ENCODE measurements at regions of chr11 and their contacts with region 1.

Region 1: DNA sequence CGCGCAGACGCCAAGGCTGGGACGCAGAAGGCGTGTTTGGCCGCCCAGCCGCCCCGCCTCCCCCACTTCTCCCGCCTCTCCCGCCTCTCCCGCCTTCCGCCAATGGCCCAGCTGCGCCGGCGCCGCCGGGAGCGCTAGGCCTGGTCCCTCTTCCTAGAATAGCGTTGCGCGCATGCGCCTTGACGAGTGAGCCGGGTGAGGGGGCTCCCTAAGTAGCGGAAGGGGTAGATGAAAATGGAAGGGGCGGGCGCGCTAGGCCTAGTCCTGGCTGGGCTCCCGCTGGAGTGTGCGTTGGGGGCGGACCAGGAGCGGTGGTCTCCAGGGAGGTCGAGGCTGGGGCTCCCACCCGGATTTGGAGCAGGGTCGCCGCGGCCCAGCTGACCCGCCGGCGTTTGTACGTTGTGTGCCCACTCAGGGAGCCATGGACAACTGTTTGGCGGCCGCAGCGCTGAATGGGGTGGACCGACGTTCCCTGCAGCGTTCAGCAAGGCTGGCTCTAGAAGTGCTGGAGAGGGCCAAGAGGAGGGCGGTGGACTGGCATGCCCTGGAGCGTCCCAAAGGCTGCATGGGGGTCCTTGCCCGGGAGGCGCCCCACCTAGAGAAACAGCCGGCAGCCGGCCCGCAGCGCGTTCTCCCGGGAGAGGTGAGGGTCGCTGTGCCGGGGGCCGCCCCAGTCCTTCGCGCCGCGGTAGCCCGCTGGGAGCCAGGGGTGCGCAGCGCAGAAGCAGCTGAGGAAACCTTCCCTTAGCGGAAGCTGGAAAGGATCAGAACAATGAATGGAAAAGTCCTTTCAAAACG is at the start of gene AKIP1:
- DNase-seq: peak; percentile 96 to 98
- ATAC-seq: peak; percentile 96 to 99 (median 97)
- H3K4me3 ChIP-seq: peak within 1 kb of the TSS; percentile 59 to 98 (median 81)
- H3K27ac ChIP-seq: peak within 1 kb of the TSS; percentile 78 to 99 (median 94)
- H3K4me1 ChIP-seq: peaks cover 0 to 63% (median 30%) of the 10 kb centered on the region in 9 donors
- H3K27me3 ChIP-seq: no peaks in the 10 kb centered on the region
- CTCF ChIP-seq: peak in 1 of 9 donors; percentile 7
- total RNA-seq, gene AKIP1: 21.6 to 29.3 (median 25.5) TPM

Region 2: DNA sequence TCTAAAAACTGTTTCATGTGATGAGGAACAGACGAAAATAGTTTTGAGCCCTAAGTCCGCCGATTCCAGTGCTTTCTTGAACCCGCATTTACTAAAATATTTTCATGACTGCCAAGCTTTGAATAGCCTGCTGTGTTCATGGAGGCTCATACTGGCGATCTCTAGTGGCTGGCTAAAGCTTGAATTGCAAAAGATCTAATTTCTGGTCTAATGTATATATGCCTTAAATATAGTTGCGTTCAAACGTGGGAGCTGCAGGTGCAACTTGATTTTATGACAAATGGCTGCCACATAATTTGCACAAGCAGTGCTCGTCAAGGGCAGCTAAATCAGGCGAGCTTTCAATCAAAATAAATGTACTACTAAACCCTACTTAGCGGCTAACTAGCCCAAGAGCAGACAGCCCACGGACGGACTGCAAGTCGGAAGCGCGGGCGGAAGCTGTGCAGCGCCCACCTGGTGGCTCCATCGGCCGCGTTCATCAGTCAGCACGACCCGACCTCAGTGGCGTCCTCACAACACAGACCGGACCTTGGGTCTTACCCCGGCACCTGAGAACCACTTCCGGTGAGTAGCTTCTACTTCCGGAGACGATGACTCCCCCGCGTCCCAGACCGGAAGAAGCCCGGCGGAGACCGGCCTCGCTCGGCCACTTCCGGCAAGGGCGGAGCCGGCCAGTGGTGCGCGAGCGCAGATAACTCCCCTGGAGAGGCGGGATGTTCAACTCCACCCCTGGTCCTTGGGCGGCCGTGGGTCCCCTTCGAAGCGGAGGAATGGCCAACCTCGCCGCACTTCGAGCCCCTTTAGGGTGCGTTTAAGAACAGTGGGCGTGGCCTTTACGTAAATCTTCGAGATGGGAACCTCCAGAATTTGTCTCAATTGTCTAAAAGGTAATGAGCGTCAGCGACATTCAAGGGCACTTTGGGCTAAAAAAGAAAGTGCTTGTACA is 222.5 kb before region 1 on chr11:
- intact Hi-C with region 1: loop called in 4 of 10 experiments (anchors 2 to 10 kb)
- DNase-seq: peak; percentile 95
- ATAC-seq: peak; percentile 96 to 99 (median 98)
- H3K4me3 ChIP-seq: peak overlapping the region; percentile 15 to 74 (median 62)
- H3K27ac ChIP-seq: peak overlapping the region; percentile 72 to 90 (median 84)
- H3K4me1 ChIP-seq: peaks cover 9 to 48% (median 30%) of the 10 kb centered on the region in 9 donors
- H3K27me3 ChIP-seq: no peaks in the 10 kb centered on the region
- CTCF ChIP-seq: peak in 4 of 9 donors; percentile 25 to 60 (median 48)

Region 3: DNA sequence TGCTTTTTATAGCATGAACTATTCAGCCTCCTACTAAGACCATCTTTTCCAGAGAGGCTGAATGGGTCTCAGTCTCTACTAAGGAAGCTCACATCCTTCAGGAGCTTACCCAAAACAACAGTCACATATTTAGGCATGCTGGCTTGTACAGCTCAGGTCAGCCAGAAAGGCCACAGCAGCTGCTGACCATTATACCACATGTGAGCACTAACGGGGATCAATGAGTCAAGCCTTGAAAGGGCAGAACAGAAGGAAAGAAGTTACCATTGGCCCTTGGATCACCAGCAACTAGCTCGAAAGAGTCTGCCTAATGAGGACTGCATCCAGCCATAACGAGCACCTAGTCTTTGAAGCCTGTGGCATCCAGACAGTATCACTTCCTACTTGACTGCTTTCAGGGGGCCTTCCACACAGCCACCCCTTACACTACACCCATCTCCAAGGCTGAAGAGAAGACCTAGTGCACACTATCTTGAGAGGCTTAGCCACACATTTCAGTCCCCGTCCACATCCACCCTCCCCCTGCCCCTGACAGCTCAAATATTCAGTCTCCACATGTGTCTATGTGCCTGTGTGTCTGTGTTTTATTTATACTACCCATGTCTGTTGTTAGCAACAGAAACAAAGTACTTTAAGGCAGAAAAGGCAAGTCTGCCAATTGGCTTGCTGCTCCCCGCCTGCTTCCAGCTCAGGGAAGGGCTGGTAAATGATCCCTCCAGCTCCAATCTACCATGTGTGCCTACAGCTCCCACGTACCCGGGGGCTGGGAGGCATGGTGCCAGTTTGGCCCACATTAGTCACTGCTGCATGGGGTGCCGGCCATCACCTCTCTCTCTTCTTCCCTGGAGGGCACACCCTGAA is 133.1 kb before region 1 on chr11:
- intact Hi-C with region 1: no loop called
- DNase-seq: peak; percentile 62 to 71
- ATAC-seq: peak; percentile 72 to 92 (median 84)
- H3K4me3 ChIP-seq: no peak overlapping the region
- H3K27ac ChIP-seq: peak overlapping the region; percentile 52 to 76 (median 72)
- H3K4me1 ChIP-seq: peaks cover 33 to 81% (median 75%) of the 10 kb centered on the region in 9 donors
- H3K27me3 ChIP-seq: no peaks in the 10 kb centered on the region
- CTCF ChIP-seq: no peak

Region 4: DNA sequence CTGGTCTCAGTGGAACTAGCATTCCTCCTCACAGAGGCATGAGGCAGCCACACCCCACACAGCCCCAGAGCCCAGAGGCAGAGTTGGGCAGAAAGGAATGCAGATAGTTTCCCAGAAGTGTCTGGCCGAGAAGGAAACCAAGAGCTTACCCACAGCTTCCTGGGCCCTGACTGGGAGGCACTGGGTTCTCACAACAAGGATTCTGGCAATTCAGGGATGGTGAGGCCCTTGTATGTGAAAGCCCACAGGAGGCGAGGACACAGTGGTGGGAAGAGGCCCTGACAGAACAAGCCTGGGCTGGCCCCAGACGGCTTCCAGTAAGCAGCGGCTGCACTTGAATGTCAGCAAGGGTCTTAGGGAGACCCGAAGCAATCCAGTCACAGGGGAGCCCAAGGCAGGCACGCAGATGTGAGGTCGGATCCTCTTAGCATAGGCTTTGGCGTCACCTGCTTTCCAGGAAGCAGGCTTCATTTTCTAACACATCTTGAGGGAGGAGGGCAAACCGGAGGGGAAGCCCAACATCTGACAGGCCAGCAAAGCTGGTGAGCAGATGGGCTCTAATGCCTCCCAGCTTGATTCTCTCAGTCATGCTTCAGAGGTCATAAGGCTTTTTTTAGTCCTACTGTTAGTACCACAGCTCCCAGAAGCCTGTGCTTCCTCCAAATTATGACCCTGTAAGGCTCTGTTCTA is 78.5 kb before region 1 on chr11:
- intact Hi-C with region 1: loop called in 2 of 10 experiments (anchors 10 kb)
- DNase-seq: no peak
- ATAC-seq: peak; percentile 31 to 82 (median 76)
- H3K4me3 ChIP-seq: no peak overlapping the region
- H3K27ac ChIP-seq: peak overlapping the region in 9 of 10 donors; percentile 15 to 81 (median 53)
- H3K4me1 ChIP-seq: peaks cover 5 to 41% (median 32%) of the 10 kb centered on the region in 9 donors
- H3K27me3 ChIP-seq: no peaks in the 10 kb centered on the region
- CTCF ChIP-seq: no peak

Region 5: GRCh38 chr11:8851316-8851715 is 59.9 kb before region 1 on chr11:
- intact Hi-C with region 1: no loop called
- DNase-seq: no peak
- ATAC-seq: no peak
- H3K4me3 ChIP-seq: no peak overlapping the region
- H3K27ac ChIP-seq: no peak overlapping the region
- H3K4me1 ChIP-seq: no peaks in the 10 kb centered on the region
- H3K27me3 ChIP-seq: no peaks in the 10 kb centered on the region
- CTCF ChIP-seq: no peak

Region 6: DNA sequence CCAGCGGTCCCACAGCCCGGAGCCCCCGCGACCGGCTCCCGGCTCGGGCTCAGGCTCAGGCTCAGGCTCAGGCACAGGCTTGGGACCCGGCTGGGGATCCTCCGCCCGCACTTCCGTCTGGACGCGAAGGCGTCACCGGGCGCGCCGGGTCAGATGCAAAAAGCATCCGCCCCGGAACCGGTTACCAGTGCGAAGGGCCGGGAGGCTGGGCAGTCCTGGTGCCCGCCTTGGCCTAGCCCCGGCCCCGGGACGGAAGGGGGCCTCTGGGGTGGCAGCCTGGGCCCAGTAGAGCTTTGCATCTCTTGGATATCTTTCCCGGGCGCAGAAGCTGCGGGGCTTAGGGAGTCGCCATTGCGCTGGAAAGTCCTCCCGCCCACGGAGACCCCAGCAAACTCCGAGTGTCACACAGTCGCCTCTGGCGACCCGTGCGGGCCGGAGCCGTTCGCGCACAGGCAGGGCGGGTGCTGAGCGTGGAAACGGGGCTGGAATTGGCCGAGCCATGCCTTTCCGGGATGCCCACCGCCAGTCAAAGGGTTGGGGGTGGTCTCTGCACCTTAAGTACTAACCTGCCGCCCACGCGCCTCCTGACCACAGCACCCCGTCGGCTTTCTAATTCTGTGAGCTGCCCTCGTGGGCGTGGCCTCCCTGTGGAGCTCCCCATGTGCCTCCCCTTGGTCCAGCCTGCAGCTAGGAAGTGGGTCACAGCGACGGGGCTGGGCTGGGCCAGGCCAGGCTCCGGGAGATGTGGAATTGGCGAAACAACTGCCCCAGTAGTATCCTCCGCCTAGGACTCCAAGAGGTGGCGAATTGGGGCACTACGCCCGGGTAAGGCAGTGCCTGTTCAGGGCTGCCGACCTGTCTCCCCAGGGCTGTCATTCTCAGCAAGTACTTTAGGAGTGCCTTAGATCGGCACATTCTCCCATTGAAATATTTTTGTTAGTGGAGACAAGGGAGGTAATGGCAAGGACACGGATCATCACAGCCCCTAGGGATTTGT is 53.4 kb after region 1 on chr11 and contains the start of gene TMEM9B:
- intact Hi-C with region 1: loop called in 6 of 10 experiments (anchors 2 to 5 kb)
- DNase-seq: peak; percentile 90 to 91
- ATAC-seq: peak; percentile 95 to 98 (median 97)
- H3K4me3 ChIP-seq: peak within 1 kb of the TSS; percentile 67 to 99 (median 85)
- H3K27ac ChIP-seq: peak within 1 kb of the TSS; percentile 74 to 99 (median 98)
- H3K4me1 ChIP-seq: peaks cover 5 to 44% (median 31%) of the 10 kb centered on the region in 9 donors
- H3K27me3 ChIP-seq: no peaks in the 10 kb centered on the region
- CTCF ChIP-seq: no peak
- total RNA-seq, gene TMEM9B: 35.5 to 52.8 (median 47.7) TPM

Measured in heart right ventricle (tissue), 16 donors.